B cell (primary cell): ENCODE measurements at regions of chr11 and their contacts with region 1.

Region 1: DNA sequence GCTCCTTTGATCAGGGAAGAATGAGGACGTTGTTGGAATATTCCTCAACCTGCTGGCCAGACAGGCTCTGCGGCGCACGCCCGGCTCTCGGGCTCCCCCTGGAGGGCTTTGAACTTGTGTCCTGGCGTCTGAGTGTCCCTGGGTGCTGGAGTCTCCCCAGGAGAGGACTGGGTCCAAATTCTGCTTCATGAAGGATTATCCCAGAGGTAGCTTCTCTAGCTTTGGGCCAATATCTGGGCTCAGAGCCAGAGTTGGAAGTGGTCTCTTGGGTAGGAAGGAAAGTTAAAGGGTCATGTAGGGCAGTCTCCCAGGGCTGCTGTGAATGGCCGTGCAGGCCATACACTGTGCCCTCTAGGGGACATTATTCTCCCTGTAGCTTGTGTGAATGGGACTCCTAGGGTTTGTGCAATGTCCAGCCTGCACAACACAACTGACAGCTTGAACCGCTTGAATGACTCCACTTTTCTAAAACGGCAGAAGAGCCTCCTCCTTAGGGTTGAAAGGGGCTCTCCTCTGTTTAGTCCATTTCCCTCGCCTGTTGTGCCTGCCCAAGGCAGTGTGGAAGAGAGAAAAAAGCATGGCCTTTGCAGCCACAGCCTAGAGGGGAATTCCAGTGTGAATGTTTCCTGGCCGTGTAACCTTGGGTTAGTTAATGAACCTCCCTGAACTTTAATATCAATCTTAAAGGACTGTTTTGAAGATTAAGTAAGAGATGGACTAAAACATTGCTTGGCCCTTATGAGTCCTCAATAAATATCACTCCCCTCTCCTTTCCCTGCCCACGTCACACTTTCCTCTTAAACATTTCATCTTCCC is 111.2 kb upstream of the THY1 start:
- DNase-seq: peak; percentile 53
- ATAC-seq: no peak
- H3K4me3 ChIP-seq: no peak overlapping the region
- H3K4me3 Mint-ChIP-seq: no peak overlapping the region
- H3K27ac ChIP-seq: no peak overlapping the region
- H3K27ac Mint-ChIP-seq: no peak overlapping the region
- H3K4me1 ChIP-seq: no peaks in the 10 kb centered on the region
- H3K4me1 Mint-ChIP-seq: peaks cover 5% of the 10 kb centered on the region
- H3K27me3 ChIP-seq: peaks cover 0 to 8% (median 0%) of the 10 kb centered on the region in 4 experiments
- H3K27me3 Mint-ChIP-seq: peaks cover 34% of the 10 kb centered on the region
- CTCF ChIP-seq: peak; percentile 78

Region 2: GRCh38 chr11:119373921-119374631 is 160.1 kb before region 1 on chr11:
- CTCF ChIA-PET with region 1: no interaction called
- POLR2A ChIA-PET with region 1: no interaction called
- intact Hi-C with region 1: no loop called
- DNase-seq: peak; percentile 51
- ATAC-seq: peak; percentile 53
- H3K4me3 ChIP-seq: no peak overlapping the region
- H3K4me3 Mint-ChIP-seq: no peak overlapping the region
- H3K27ac ChIP-seq: no peak overlapping the region
- H3K27ac Mint-ChIP-seq: no peak overlapping the region
- H3K4me1 ChIP-seq: no peaks in the 10 kb centered on the region
- H3K4me1 Mint-ChIP-seq: no peaks in the 10 kb centered on the region
- H3K27me3 ChIP-seq: peaks cover 0 to 10% (median 0%) of the 10 kb centered on the region in 4 experiments
- H3K27me3 Mint-ChIP-seq: peaks cover 18% of the 10 kb centered on the region
- CTCF ChIP-seq: peak; percentile 68

Region 3: GRCh38 chr11:119421941-119422808 is 112.0 kb before region 1 on chr11:
- CTCF ChIA-PET with region 1: no interaction called
- POLR2A ChIA-PET with region 1: no interaction called
- intact Hi-C with region 1: no loop called
- DNase-seq: no peak
- ATAC-seq: no peak
- H3K4me3 ChIP-seq: no peak overlapping the region
- H3K4me3 Mint-ChIP-seq: peak overlapping the region; percentile 27
- H3K27ac ChIP-seq: no peak overlapping the region
- H3K27ac Mint-ChIP-seq: no peak overlapping the region
- H3K4me1 ChIP-seq: peaks cover 17 to 18% of the 10 kb centered on the region in 2 donors
- H3K4me1 Mint-ChIP-seq: peaks cover 16% of the 10 kb centered on the region
- H3K27me3 ChIP-seq: peaks cover 0 to 39% (median 21%) of the 10 kb centered on the region in 4 experiments
- H3K27me3 Mint-ChIP-seq: peaks cover 73% of the 10 kb centered on the region
- CTCF ChIP-seq: no peak

Region 4: GRCh38 chr11:119481021-119481666 is 53.0 kb before region 1 on chr11:
- CTCF ChIA-PET with region 1: interaction called, 7 read pairs
- POLR2A ChIA-PET with region 1: no interaction called
- intact Hi-C with region 1: loop called (anchors 1 kb)
- DNase-seq: peak; percentile 68
- ATAC-seq: peak; percentile 65
- H3K4me3 ChIP-seq: no peak overlapping the region
- H3K4me3 Mint-ChIP-seq: no peak overlapping the region
- H3K27ac ChIP-seq: no peak overlapping the region
- H3K27ac Mint-ChIP-seq: no peak overlapping the region
- H3K4me1 ChIP-seq: peaks cover 4 to 5% of the 10 kb centered on the region in 2 donors
- H3K4me1 Mint-ChIP-seq: peaks cover 3% of the 10 kb centered on the region
- H3K27me3 ChIP-seq: peaks cover 0 to 13% (median 1%) of the 10 kb centered on the region in 4 experiments
- H3K27me3 Mint-ChIP-seq: peaks cover 42% of the 10 kb centered on the region
- CTCF ChIP-seq: peak; percentile 88

Region 5: GRCh38 chr11:119518746-119519730 is 15.1 kb before region 1 on chr11:
- CTCF ChIA-PET with region 1: no interaction called
- POLR2A ChIA-PET with region 1: no interaction called
- intact Hi-C with region 1: no loop called
- DNase-seq: no peak
- ATAC-seq: no peak
- H3K4me3 ChIP-seq: no peak overlapping the region
- H3K4me3 Mint-ChIP-seq: no peak overlapping the region
- H3K27ac ChIP-seq: no peak overlapping the region
- H3K27ac Mint-ChIP-seq: no peak overlapping the region
- H3K4me1 ChIP-seq: no peaks in the 10 kb centered on the region
- H3K4me1 Mint-ChIP-seq: peaks cover 3% of the 10 kb centered on the region
- H3K27me3 ChIP-seq: peaks cover 0 to 4% (median 1%) of the 10 kb centered on the region in 4 experiments
- H3K27me3 Mint-ChIP-seq: peaks cover 14% of the 10 kb centered on the region
- CTCF ChIP-seq: no peak

Region 6: GRCh38 chr11:119624102-119624615 is 90.0 kb after region 1 on chr11:
- CTCF ChIA-PET with region 1: no interaction called
- POLR2A ChIA-PET with region 1: no interaction called
- intact Hi-C with region 1: no loop called
- DNase-seq: peak; percentile 25
- ATAC-seq: no peak
- H3K4me3 ChIP-seq: no peak overlapping the region
- H3K4me3 Mint-ChIP-seq: no peak overlapping the region
- H3K27ac ChIP-seq: no peak overlapping the region
- H3K27ac Mint-ChIP-seq: no peak overlapping the region
- H3K4me1 ChIP-seq: no peaks in the 10 kb centered on the region
- H3K4me1 Mint-ChIP-seq: peaks cover 4% of the 10 kb centered on the region
- H3K27me3 ChIP-seq: peaks cover 0 to 4% (median 2%) of the 10 kb centered on the region in 4 experiments
- H3K27me3 Mint-ChIP-seq: peaks cover 15% of the 10 kb centered on the region
- CTCF ChIP-seq: peak; percentile 68